BJ (cell line): ENCODE measurements at regions of chr18 and their contacts with region 1.

Region 1: GRCh38 chr18:62249478-62250097 is 62.5 kb downstream of the RELCH start:
- DNase-seq: no peak
- H3K4me3 ChIP-seq: no peak overlapping the region
- H3K27me3 ChIP-seq: no peaks in the 10 kb centered on the region
- CTCF ChIP-seq: peak; percentile 76

Region 2: GRCh38 chr18:62239475-62239874 is 10.1 kb before region 1 on chr18:
- CTCF ChIA-PET with region 1: interaction called, 15 read pairs
- POLR2A ChIA-PET with region 1: no interaction called
- DNase-seq: no peak
- H3K4me3 ChIP-seq: no peak overlapping the region
- H3K27me3 ChIP-seq: no peaks in the 10 kb centered on the region
- CTCF ChIP-seq: no peak